GM13976 (cell line): ENCODE measurements at regions of chr7 and their contacts with region 1.

Region 1: GRCh38 chr7:141654551-141654950 is 47.4 kb downstream of the DENND11 start:
- DNase-seq: peak; percentile 65
- CTCF ChIP-seq: peak; percentile 79

Region 2: DNA sequence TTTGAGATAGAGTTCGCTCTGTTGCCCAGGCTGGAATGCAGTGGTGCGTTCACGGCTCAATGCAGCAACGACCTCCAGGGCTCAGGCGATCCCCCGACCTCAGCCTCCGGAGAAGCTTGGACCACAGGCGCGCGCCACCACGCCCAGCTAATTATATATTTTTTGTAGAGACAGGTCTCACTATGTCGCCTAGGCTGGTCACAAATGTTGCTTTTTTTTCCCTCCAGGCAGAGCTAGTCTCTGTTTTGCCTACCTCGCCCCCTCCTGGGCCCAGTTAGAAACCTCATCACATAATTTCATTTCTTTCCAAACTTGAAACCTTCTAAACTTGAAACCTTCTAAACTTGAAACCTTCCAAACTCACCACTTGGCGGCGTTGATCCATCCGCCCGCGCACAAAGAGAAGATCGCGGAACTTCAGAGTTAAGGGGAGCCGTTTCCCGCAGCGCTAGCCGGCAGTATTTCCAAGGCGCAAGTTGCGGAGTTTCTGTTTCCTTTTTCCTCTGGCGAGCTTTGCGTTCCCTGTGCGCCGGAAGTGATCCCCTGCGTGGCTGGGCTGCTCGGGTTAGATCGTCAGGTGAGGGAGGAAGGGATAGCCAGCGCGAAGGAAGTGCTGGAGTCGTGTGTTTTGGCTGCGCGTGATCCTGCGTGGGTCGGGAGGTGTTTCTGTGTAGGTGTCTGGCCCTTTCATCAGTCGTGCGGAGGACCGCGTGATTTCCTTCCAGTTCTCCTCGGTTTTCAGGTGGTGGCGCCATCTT is 83.5 kb after region 1 on chr7 and contains the start of gene SSBP1:
- in situ Hi-C with region 1: loop called (anchors 10 kb)
- DNase-seq: peak; percentile 85
- CTCF ChIP-seq: peak; percentile 75